Naive thymus-derived CD4-positive, alpha-beta T cell (primary cell): ENCODE measurements at regions of chr17 and their contacts with region 1.

Region 1: GRCh38 chr17:48295362-48296288 is 134.4 kb downstream of the SKAP1 start:
- DNase-seq: peak in 4 of 9 donors; percentile 9 to 43 (median 16)
- ATAC-seq: peak; percentile 72
- H3K4me3 ChIP-seq: peak overlapping the region; percentile 34
- H3K4me3 Mint-ChIP-seq: peak overlapping the region; percentile 1 to 88 (median 77)
- H3K27ac ChIP-seq: peak overlapping the region; percentile 37
- H3K27ac Mint-ChIP-seq: peak overlapping the region; percentile 51 to 95 (median 78)
- H3K4me1 ChIP-seq: peaks cover 16 to 43% of the 10 kb centered on the region in 2 donors
- H3K4me1 Mint-ChIP-seq: peaks cover 40 to 79% (median 73%) of the 10 kb centered on the region in 7 donors
- H3K27me3 ChIP-seq: no peaks in the 10 kb centered on the region
- H3K27me3 Mint-ChIP-seq: no peaks in the 10 kb centered on the region

Region 2: GRCh38 chr17:48259694-48260291 is 35.8 kb before region 1 on chr17:
- CTCF ChIA-PET with region 1: interaction called, 3 read pairs
- POLR2A ChIA-PET with region 1: no interaction called
- intact Hi-C with region 1: loop called in 1 of 2 experiments (anchors 5 kb)
- DNase-seq: no peak
- ATAC-seq: no peak
- H3K4me3 ChIP-seq: no peak overlapping the region
- H3K4me3 Mint-ChIP-seq: no peak overlapping the region
- H3K27ac ChIP-seq: no peak overlapping the region
- H3K27ac Mint-ChIP-seq: no peak overlapping the region
- H3K4me1 ChIP-seq: no peaks in the 10 kb centered on the region
- H3K4me1 Mint-ChIP-seq: peaks cover 4 to 29% (median 10%) of the 10 kb centered on the region in 7 donors
- H3K27me3 ChIP-seq: no peaks in the 10 kb centered on the region
- H3K27me3 Mint-ChIP-seq: no peaks in the 10 kb centered on the region

Region 3: GRCh38 chr17:48307814-48308411 is 12.3 kb after region 1 on chr17:
- CTCF ChIA-PET with region 1: interaction called, 8 read pairs
- POLR2A ChIA-PET with region 1: interaction called, 5 read pairs
- intact Hi-C with region 1: loop called (anchors 1 to 2 kb)
- DNase-seq: peak in 6 of 9 donors; percentile 25 to 49 (median 34)
- ATAC-seq: peak; percentile 78
- H3K4me3 ChIP-seq: no peak overlapping the region
- H3K4me3 Mint-ChIP-seq: no peak overlapping the region
- H3K27ac ChIP-seq: no peak overlapping the region
- H3K27ac Mint-ChIP-seq: peak overlapping the region in 2 of 9 donors; percentile 1 to 27
- H3K4me1 ChIP-seq: no peaks in the 10 kb centered on the region
- H3K4me1 Mint-ChIP-seq: peaks cover 13 to 57% (median 36%) of the 10 kb centered on the region in 7 donors
- H3K27me3 ChIP-seq: no peaks in the 10 kb centered on the region
- H3K27me3 Mint-ChIP-seq: no peaks in the 10 kb centered on the region

Region 4: DNA sequence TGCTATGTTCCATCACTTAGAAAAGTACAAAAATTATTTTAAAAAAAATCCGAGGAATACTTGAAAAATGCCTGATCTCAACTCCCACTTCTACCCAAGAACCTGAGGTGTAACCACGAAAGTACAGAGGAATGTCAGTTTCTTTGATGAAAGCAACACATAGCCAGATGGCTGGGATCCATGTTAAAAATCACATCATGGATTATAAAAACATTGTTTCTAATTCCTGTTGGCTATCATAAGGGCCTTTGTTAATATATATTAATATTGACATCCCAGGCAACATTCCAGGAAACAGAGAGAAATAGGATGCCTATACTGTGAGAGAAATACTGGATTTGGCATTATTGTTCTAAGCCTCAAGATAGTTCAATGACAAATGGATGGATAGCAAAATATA is 19.1 kb after region 1 on chr17:
- CTCF ChIA-PET with region 1: interaction called, 4 read pairs
- POLR2A ChIA-PET with region 1: no interaction called
- intact Hi-C with region 1: loop called (anchors 2 kb)
- DNase-seq: no peak
- ATAC-seq: no peak
- H3K4me3 ChIP-seq: no peak overlapping the region
- H3K4me3 Mint-ChIP-seq: no peak overlapping the region
- H3K27ac ChIP-seq: no peak overlapping the region
- H3K27ac Mint-ChIP-seq: no peak overlapping the region
- H3K4me1 ChIP-seq: no peaks in the 10 kb centered on the region
- H3K4me1 Mint-ChIP-seq: peaks cover 12 to 66% (median 39%) of the 10 kb centered on the region in 7 donors
- H3K27me3 ChIP-seq: no peaks in the 10 kb centered on the region
- H3K27me3 Mint-ChIP-seq: no peaks in the 10 kb centered on the region

Region 5: DNA sequence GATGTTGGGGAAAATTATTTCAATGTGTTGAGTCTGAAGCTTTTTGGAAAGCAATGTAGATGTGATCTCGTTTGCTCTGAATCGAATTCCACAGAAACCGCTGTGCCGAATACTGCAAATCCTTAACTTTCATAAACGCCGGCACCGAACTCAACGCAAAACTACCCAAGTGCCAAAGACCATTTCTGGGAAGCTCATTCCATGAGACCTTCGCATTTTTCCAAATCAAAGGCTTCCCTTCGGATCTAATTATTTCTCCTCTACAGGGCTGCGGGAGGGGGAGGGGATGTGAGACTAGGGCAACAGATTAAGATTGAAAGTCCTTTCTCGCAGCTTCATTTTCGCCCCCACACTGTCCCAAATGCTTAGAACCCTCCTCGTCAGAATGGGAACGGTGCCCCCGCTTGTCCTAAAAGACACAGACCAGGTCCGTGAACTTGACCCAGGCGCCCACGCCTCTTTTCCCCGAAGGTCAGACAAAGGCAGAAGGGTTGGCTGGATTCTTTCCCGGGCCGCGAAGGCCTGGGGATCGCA is 422.7 kb after region 1 on chr17:
- CTCF ChIA-PET with region 1: no interaction called
- POLR2A ChIA-PET with region 1: no interaction called
- intact Hi-C with region 1: no loop called
- DNase-seq: no peak
- ATAC-seq: no peak
- H3K4me3 ChIP-seq: no peak overlapping the region
- H3K4me3 Mint-ChIP-seq: peak overlapping the region in 8 of 10 donors; percentile 14 to 73 (median 50)
- H3K27ac ChIP-seq: no peak overlapping the region
- H3K27ac Mint-ChIP-seq: peak overlapping the region in 4 of 9 donors; percentile 30 to 78 (median 66)
- H3K4me1 ChIP-seq: peaks cover 2 to 14% of the 10 kb centered on the region in 2 donors
- H3K4me1 Mint-ChIP-seq: peaks cover 2 to 42% (median 21%) of the 10 kb centered on the region in 7 donors
- H3K27me3 ChIP-seq: peaks cover 31 to 58% of the 10 kb centered on the region in 2 donors
- H3K27me3 Mint-ChIP-seq: peaks cover 61 to 96% (median 81%) of the 10 kb centered on the region in 5 donors

Region 6: GRCh38 chr17:48985436-48986245 is 690.0 kb after region 1 on chr17:
- CTCF ChIA-PET with region 1: no interaction called
- POLR2A ChIA-PET with region 1: no interaction called
- intact Hi-C with region 1: no loop called
- DNase-seq: no peak
- ATAC-seq: no peak
- H3K4me3 ChIP-seq: no peak overlapping the region
- H3K4me3 Mint-ChIP-seq: no peak overlapping the region
- H3K27ac ChIP-seq: no peak overlapping the region
- H3K27ac Mint-ChIP-seq: no peak overlapping the region
- H3K4me1 ChIP-seq: no peaks in the 10 kb centered on the region
- H3K4me1 Mint-ChIP-seq: peaks cover 0 to 1% (median 0%) of the 10 kb centered on the region in 7 donors
- H3K27me3 ChIP-seq: peaks cover 4 to 9% of the 10 kb centered on the region in 2 donors
- H3K27me3 Mint-ChIP-seq: peaks cover 26 to 42% (median 35%) of the 10 kb centered on the region in 5 donors